Activated naive CD4-positive, alpha-beta T cell treated with anti-CD3 and anti-CD28 coated beads for 36 hours (primary cell): ENCODE measurements at regions of chr4 and their contacts with region 1.

Region 1: DNA sequence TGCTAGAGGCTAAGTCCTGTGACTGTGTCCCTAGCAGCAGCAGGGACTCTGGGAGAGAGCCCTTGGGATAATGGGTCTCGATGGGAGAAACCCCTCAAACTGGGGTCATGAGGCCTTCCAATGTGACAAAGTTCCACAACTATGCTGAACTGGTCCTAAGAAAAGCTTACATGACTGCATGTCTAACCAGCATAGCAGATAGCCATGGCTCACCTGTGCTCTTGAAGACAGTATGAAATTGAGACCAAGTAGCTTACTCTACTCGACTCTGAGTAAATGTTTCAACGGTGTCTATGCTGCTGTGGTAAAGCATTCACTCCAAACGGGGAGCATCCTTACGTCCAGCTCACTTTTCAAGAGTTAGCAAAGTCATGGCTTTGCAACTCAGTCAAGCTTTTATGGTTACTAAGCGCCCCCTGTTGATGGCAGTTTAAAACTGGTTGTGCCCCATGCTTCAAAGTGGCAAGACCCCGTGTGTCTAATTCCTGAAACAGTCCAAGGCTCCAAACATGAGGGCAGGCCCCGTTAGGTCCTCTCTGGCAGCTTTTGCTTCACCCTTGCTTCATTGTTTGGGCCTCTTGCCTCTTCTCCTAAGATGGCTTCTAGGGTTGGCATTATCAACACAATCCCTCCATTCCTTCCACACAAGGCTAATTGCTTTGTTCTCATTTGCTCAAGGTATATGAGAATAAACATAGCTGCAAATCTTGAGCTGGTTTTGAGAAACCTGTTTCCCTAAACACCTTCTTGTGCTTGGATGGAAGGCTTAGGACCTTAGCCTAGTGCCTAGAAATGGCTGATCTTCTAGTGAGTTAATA is 46.6 kb downstream of the CCNG2 start:
- DNase-seq: peak; percentile 81
- H3K4me3 Mint-ChIP-seq: no peak overlapping the region
- H3K27ac Mint-ChIP-seq: no peak overlapping the region
- H3K4me1 Mint-ChIP-seq: peaks cover 2% of the 10 kb centered on the region
- H3K27me3 Mint-ChIP-seq: no peaks in the 10 kb centered on the region

Region 2: GRCh38 chr4:76430519-76431388 is 772.8 kb before region 1 on chr4:
- CTCF ChIA-PET with region 1: interaction called, 3 read pairs
- intact Hi-C with region 1: loop called (anchors 1 kb)
- DNase-seq: no peak
- H3K4me3 Mint-ChIP-seq: no peak overlapping the region
- H3K27ac Mint-ChIP-seq: no peak overlapping the region
- H3K4me1 Mint-ChIP-seq: peaks cover 4% of the 10 kb centered on the region
- H3K27me3 Mint-ChIP-seq: peaks cover 12% of the 10 kb centered on the region

Region 3: DNA sequence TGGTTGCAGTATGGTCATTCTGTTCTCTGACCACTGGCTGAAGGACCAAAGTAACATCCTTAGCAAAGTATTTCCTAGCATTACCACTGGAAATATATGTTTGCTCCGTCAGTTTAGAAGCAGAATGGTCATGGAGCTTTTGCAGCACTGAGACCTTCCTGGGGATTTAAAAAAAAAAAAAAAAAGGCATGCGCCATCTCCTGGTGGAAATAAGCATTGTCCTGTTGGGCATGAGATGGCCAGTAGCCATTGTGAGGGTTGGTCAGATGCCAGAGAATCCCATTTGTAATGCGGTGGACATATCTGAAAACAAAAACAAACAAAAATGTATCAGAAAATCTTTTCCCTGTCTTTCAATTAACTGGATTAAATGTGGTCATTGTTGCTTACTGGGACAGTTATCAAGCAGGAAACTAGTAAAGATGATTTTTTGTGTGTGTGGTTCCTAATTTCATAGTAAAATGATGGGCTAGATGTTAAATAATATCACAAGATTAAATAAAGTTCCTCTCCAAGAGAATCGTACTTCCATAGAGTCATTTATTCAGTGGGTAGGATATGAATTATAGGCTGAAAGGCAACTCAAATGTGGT is 445.2 kb before region 1 on chr4:
- CTCF ChIA-PET with region 1: no interaction called
- intact Hi-C with region 1: loop called (anchors 5 kb)
- DNase-seq: no peak
- H3K4me3 Mint-ChIP-seq: no peak overlapping the region
- H3K27ac Mint-ChIP-seq: no peak overlapping the region
- H3K4me1 Mint-ChIP-seq: peaks cover 11% of the 10 kb centered on the region
- H3K27me3 Mint-ChIP-seq: peaks cover 6% of the 10 kb centered on the region

Region 4: DNA sequence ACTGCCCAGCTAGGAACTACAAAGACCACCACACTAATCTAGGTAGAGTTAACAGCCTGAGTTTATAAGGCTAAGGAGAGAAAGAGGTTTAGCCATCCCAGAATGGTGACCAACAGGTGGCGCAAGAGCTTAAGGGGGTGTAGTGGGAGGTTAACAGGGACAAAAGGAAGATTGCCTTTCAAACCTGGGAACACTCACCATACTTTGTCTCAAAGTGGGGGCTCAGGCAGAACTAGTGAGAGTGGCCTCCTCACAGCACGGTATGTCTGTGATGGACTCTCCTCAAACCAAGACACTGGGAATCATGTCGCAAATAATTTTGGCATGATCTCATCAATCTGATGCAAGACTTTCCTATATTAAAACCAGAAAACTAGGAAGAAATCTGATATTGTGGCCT is 151.2 kb before region 1 on chr4:
- CTCF ChIA-PET with region 1: interaction called, 50 read pairs
- intact Hi-C with region 1: loop called (anchors 1 kb)
- DNase-seq: peak; percentile 81
- H3K4me3 Mint-ChIP-seq: no peak overlapping the region
- H3K27ac Mint-ChIP-seq: peak overlapping the region; percentile 50
- H3K4me1 Mint-ChIP-seq: no peaks in the 10 kb centered on the region
- H3K27me3 Mint-ChIP-seq: no peaks in the 10 kb centered on the region

Region 5: GRCh38 chr4:77104791-77105540 is 98.6 kb before region 1 on chr4:
- CTCF ChIA-PET with region 1: interaction called, 214 read pairs
- intact Hi-C with region 1: no loop called
- DNase-seq: no peak
- H3K4me3 Mint-ChIP-seq: no peak overlapping the region
- H3K27ac Mint-ChIP-seq: no peak overlapping the region
- H3K4me1 Mint-ChIP-seq: peaks cover 8% of the 10 kb centered on the region
- H3K27me3 Mint-ChIP-seq: no peaks in the 10 kb centered on the region

Region 6: DNA sequence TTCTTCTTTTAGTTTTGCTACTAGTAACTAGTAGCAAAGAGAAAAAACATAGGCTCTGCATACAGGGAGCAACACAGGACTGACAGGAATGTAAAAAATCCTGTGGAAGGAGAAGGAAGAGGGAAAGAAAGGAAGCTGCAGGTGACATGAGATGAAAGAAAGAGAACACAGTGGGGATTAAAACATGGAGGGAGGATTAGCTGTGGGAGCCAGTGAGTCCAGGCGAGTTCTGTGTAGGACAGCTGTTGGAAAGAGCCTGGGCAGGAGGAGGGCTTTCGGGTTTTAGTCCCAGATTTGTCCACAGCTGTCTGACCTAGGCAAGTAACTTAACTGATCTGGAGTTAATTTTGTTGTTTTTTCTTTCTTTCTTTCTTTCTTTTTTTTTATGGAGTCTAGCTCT is 25.0 kb before region 1 on chr4:
- CTCF ChIA-PET with region 1: interaction called, 11 read pairs
- intact Hi-C with region 1: no loop called
- DNase-seq: no peak
- H3K4me3 Mint-ChIP-seq: no peak overlapping the region
- H3K27ac Mint-ChIP-seq: no peak overlapping the region
- H3K4me1 Mint-ChIP-seq: no peaks in the 10 kb centered on the region
- H3K27me3 Mint-ChIP-seq: no peaks in the 10 kb centered on the region